Stomach (tissue), 19 donors: ENCODE measurements at regions of chr15 and their contacts with region 1.

Region 1: DNA sequence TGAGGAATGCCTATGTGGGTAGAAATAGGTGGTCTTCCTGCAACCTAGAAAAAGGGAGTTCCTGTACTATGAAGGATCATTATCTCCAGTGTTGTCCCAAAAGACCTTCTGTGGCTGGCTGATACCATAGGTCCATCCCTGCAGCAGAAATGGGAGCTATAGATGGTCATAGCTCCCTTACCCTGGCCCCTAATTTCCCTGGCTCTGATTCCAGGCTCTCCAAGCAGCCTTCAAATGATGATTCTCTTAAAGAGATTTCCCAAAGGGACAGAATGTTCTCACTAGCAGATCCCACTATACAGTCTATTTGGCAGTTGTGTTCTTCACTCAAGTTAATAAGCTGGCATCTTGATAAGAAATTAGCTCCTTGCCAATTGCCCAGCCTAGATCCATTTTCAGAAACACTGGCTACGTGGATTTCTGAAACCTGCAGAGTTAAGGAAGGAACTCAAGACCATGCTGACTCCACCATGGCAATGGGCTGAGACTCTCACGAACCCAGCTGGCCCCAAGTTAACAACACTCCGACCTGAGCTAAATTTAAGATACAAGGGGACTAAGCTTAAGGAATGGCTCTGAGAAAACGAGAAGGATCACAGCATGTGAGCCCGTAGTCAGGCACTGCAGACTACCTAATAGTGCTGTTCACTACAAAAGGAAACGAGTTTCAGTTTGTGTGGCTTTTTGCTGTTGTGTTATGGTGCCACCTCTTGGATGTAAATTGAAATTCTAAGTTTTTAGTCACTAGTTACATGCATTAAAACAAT is 11.4 kb downstream of the C15orf40 start:
- DNase-seq: peak in 1 of 2 donors; percentile 74
- H3K4me3 ChIP-seq: peak overlapping the region in 3 of 4 donors; percentile 12 to 35 (median 16)
- H3K27ac ChIP-seq: peak overlapping the region; percentile 48 to 88 (median 63)
- H3K4me1 ChIP-seq: peaks cover 9 to 13% (median 9%) of the 10 kb centered on the region in 4 donors
- H3K27me3 ChIP-seq: no peaks in the 10 kb centered on the region
- CTCF ChIP-seq: peak in 4 of 7 experiments; percentile 5 to 70 (median 36)
- EP300 ChIP-seq: no peak
- POLR2A ChIP-seq: no peak

Region 2: GRCh38 chr15:82570721-82571508 is 429.2 kb before region 1 on chr15:
- intact Hi-C with region 1: no loop called
- DNase-seq: peak in 1 of 2 donors; percentile 47
- H3K4me3 ChIP-seq: peak overlapping the region; percentile 42 to 43 (median 43)
- H3K27ac ChIP-seq: peak overlapping the region in 4 of 5 donors; percentile 13 to 79 (median 64)
- H3K4me1 ChIP-seq: peaks cover 12 to 23% (median 16%) of the 10 kb centered on the region in 4 donors
- H3K27me3 ChIP-seq: peaks cover 0 to 7% (median 4%) of the 10 kb centered on the region in 3 donors
- CTCF ChIP-seq: no peak
- EP300 ChIP-seq: no peak
- POLR2A ChIP-seq: no peak

Region 3: DNA sequence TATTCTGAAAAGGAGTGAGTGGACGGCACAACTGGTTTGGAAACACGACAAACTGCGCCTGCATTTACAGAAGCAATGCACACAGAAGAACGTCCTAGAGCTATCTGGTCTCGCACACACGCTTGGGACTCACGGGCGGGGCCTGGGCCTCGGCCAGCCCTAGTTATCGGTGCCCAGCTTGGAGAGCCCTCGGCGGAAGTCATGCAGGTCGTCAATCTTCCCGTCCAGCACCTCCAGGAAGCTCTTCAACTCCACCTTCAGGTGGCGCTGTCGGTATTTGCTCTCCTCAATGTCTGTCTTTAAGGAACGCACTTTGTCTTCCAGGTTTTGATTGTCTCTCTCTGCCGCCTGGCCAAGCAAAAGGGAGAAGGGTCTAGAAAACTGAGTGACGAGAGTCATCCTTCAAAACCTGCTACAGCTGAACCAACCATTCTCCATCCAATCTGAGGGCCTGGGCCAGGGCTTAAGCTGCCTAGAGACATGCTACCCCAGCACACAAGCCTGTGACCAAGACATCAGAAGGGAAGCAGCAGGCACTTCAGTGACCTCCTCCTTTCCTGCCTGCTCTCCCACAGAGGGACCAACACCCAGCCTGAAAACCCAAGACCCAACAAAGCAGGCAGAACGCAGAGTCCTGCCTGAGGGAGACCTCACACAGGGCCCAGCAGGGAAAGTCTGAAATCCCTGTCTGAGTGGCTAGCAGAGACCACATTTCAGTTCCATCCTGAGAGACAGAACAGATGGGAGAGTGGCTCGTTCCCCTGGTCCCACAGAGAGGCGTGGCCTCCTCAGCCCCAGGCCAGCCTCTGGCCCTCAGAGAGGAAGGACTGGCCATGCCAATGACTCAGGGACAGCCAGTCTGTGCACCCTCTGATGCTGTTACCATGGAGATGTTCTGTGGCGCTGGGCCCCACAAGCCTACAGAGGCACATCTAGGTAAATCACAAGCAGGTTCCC is 150.3 kb before region 1 on chr15:
- intact Hi-C with region 1: loop called (anchors 5 kb)
- DNase-seq: peak; percentile 79 to 95
- H3K4me3 ChIP-seq: no peak overlapping the region
- H3K27ac ChIP-seq: peak overlapping the region; percentile 5 to 66 (median 41)
- H3K4me1 ChIP-seq: peaks cover 10 to 20% (median 13%) of the 10 kb centered on the region in 4 donors
- H3K27me3 ChIP-seq: no peaks in the 10 kb centered on the region
- CTCF ChIP-seq: peak in 5 of 7 experiments; percentile 43 to 78 (median 70)
- EP300 ChIP-seq: no peak
- POLR2A ChIP-seq: no peak

Region 4: DNA sequence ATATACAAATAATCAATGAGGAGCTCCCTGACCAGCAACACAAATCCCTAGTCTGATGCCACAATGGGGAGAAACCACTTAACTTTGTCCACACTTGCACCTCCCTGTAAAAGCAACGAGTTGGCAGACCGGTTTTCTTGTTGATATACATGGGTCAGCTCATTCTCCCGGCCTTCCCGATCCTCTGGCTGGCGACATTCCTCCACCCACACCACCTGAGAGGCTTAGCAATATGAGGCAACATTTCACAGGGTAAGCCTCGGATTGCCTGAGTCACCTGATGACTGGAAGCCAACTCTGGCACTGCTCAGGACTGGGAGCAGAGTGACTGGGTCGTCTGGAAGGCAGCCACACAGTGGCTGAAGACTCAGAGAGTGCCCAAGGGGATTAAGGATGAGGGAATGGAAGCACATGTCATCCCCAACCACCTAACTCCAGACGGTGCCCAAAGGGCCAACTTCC is 57.4 kb before region 1 on chr15:
- intact Hi-C with region 1: no loop called
- DNase-seq: peak; percentile 79 to 91
- H3K4me3 ChIP-seq: no peak overlapping the region
- H3K27ac ChIP-seq: peak overlapping the region; percentile 6 to 66 (median 63)
- H3K4me1 ChIP-seq: peaks cover 8 to 32% (median 22%) of the 10 kb centered on the region in 4 donors
- H3K27me3 ChIP-seq: no peaks in the 10 kb centered on the region
- CTCF ChIP-seq: no peak
- EP300 ChIP-seq: no peak
- POLR2A ChIP-seq: no peak